ENCODE measurements at regions of chr19 and their contacts with region 1.

Region 1: DNA sequence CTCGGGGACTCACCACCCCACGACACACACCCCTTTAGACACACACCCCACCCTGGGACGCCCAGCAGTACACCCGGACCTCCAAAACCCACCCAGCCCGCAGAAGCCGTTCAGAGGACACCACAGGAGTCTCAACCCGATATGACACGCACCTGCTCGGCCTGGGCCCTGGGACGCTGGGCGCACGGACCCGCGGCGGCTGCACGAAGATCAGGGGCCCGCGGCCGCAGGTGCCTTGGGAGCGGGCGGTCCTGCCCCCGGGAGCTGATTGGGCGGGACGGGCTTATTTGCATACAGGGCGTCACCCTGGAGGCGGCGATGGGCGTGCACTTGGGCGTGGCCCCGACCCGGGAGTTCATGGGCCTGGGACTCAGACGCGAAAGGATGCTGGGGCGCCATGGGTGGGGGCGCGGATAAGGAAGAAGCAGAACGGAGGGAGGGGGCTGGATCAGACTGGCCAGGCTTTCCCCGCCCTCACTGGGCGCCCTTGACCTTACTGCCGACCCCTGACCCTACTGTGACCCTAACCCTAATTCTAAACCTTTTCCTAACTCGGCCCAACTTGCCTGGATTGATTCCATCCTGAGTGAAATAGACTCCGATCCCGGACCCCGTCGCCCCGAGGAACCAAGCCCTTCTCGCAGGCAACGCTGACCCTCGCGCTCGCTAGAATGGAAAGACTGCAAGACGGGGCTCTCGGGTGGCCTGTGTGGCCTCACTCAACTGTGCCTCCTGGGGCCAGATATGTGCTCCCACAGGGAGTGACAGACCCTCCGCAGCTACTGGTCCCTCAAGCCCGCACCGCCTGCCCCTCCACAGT is at the start of gene MEF2B:
- DNase-seq: peak; percentile 97
- ATAC-seq: peak; percentile 93
- H3K4me3 Mint-ChIP-seq: peak within 1 kb of the TSS; percentile 61
- H3K27ac Mint-ChIP-seq: no peak within 1 kb of the TSS
- H3K4me1 Mint-ChIP-seq: peaks cover 15% of the 10 kb centered on the region
- H3K27me3 Mint-ChIP-seq: peaks cover 71% of the 10 kb centered on the region
- CTCF ChIP-seq: no peak
- total RNA-seq, gene MEF2B: 1.3 to 1.7 TPM (median 1.7 TPM) in 3 replicates

Region 2: GRCh38 chr19:19021115-19021514 is 149.1 kb before region 1 on chr19:
- CTCF ChIA-PET with region 1: no interaction called
- POLR2A ChIA-PET with region 1: no interaction called
- DNase-seq: no peak
- ATAC-seq: no peak
- H3K4me3 Mint-ChIP-seq: no peak overlapping the region
- H3K27ac Mint-ChIP-seq: no peak overlapping the region; the same call in 1 of the 2 replicates
- H3K4me1 Mint-ChIP-seq: no peaks in the 10 kb centered on the region
- H3K27me3 Mint-ChIP-seq: 0 out of 2 replicates have a peak, but pooled peaks cover 2% of the 10 kb centered on the region
- CTCF ChIP-seq: no peak

Region 3: GRCh38 chr19:19145684-19146608 is 24.3 kb before region 1 on chr19:
- CTCF ChIA-PET with region 1: interaction called, 52 read pairs
- POLR2A ChIA-PET with region 1: interaction called, 3 read pairs
- DNase-seq: peak; percentile 94
- ATAC-seq: peak; percentile 83
- H3K4me3 Mint-ChIP-seq: no peak overlapping the region
- H3K27ac Mint-ChIP-seq: no peak overlapping the region
- H3K4me1 Mint-ChIP-seq: no peaks in the 10 kb centered on the region
- H3K27me3 Mint-ChIP-seq: peaks cover 31% of the 10 kb centered on the region
- CTCF ChIP-seq: peak; percentile 98

Region 4: GRCh38 chr19:19155495-19156219 is 14.6 kb before region 1 on chr19:
- CTCF ChIA-PET with region 1: interaction called, 18 read pairs
- POLR2A ChIA-PET with region 1: interaction called, 12 read pairs
- DNase-seq: no peak
- ATAC-seq: no peak
- H3K4me3 Mint-ChIP-seq: no peak overlapping the region
- H3K27ac Mint-ChIP-seq: no peak overlapping the region
- H3K4me1 Mint-ChIP-seq: peaks cover 5% of the 10 kb centered on the region; the same call in 1 of the 2 replicates
- H3K27me3 Mint-ChIP-seq: peaks cover 33% of the 10 kb centered on the region
- CTCF ChIP-seq: no peak